Esophagus squamous epithelium (tissue), 5 donors: ENCODE measurements at regions of chr17 and their contacts with region 1.

Region 1: DNA sequence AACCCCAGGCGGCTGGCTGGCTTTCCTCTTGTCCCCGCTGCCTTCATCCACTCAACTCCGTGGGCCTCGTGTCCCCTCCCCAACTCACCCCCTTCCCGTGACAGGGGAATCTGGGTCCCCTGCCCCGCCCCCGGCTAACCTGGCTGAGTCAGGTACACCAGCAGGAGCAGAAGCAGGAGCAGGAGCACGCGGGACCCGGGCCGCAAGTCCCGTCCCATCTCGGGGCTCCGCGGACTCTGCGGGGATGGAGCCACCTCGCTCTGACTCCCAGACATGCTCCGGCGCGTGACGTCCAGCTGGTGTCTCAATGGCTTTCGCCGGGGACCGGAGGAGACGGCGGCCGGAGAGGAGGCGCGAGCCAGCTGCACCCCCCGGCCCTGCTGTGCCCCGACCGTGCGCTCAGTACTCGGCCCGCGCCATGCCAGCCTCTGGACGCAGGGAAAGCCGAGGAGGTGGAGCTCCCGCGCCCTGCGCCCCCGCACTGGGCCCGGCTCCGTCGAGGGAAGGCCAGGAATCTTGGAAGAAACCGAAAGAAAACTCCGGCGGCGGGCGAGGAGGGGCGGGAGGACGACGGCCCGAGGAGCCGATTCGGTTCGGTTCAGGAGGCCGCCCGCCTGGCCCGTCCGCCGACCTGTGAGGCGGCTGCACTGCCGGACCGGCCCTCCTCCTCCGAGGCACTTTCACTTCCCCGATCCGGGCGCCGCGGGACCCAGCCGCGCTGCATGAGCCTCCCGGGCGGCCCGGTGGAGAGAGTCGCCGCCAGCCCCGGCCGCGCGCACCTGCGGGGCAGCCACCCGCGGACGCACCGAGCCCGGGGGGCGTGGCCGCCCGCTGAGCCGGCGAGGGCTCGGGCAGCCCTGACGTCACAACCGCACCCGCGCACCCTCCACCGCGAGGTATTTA is at the starts of genes CXCL16 and ZMYND15:
- DNase-seq: no peak
- H3K4me3 ChIP-seq: peak within 1 kb of the TSS; percentile 48 to 85 (median 76)
- H3K27ac ChIP-seq: peak within 1 kb of the TSS; percentile 55 to 81 (median 77)
- H3K4me1 ChIP-seq: peaks cover 6 to 22% (median 9%) of the 10 kb centered on the region in 3 donors
- H3K27me3 ChIP-seq: peaks cover 0 to 10% (median 0%) of the 10 kb centered on the region in 4 donors
- CTCF ChIP-seq: no peak
- POLR2A ChIP-seq: peak in 3 of 4 donors; percentile 15 to 63 (median 52)
- total RNA-seq, gene CXCL16: 15.2 to 28.2 (median 19.5) TPM
- total RNA-seq, gene ZMYND15: 1.1 to 1.7 TPM in 2 of 4 donors, not detected in the others

Region 2: DNA sequence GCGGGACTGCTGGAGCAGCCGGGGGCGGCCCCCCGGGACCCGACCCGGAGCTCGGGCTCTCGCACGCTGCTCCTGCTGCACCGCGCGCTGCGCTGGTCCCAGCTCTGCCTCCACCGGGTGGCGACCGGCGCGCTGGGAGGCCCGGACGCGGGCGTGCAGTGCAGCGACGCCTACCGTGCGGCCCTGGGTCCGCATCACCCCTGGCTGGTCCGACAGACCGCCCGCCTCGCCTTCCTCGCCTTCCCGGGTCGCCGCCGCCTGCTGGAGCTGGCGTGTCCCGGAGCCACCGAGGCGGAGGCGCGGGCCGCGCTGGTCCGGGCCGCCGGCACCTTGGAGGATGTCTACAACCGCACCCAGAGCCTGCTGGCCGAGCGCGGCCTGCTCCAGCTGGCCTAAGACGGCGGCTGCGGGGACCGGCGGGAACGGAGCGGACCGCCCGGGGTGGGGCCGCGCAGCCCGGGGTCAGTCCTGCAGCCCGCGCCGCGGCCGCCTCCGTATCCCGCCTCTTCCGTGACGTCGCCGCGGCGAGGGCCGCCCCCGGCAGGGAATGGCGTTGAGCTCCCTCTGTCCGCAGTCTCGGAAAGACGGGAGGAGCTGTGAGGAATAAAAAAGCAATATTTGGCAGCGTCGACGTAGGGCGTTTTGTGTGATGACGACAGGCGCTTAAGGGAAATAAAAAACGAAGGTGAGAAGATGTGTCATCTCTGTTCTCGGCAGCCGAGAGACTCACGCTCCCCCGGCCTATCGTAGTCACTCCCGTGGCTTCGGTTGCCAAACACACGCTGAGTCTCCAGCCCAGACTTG is 50.7 kb after region 1 on chr17:
- intact Hi-C with region 1: loop called (anchors 5 kb)
- DNase-seq: peak; percentile 24
- H3K4me3 ChIP-seq: peak overlapping the region; percentile 44 to 89 (median 67)
- H3K27ac ChIP-seq: peak overlapping the region; percentile 95 to 99 (median 96)
- H3K4me1 ChIP-seq: peaks cover 21 to 56% (median 32%) of the 10 kb centered on the region in 3 donors
- H3K27me3 ChIP-seq: peaks cover 0 to 14% (median 0%) of the 10 kb centered on the region in 4 donors
- CTCF ChIP-seq: peak; percentile 68 to 94 (median 84)
- POLR2A ChIP-seq: peak in 3 of 4 donors; percentile 52 to 90 (median 89)